GM12878 (cell line): ENCODE measurements at regions of chr9 and their contacts with region 1.

Region 1: GRCh38 chr9:123929870-123930831 is at the start of gene DENND1A:
- DNase-seq: no peak
- ATAC-seq: peak; percentile 83
- H3K4me3 ChIP-seq: peak within 1 kb of the TSS; percentile 85
- H3K27ac ChIP-seq: peak within 1 kb of the TSS; percentile 79
- H3K4me1 ChIP-seq: peaks cover 18% of the 10 kb centered on the region
- H3K27me3 ChIP-seq: no peaks in the 10 kb centered on the region
- CTCF ChIP-seq: no peak
- EP300 ChIP-seq: no peak
- POLR2A ChIP-seq: peak; percentile 71; the same call in 1 of the 2 replicates
- RAD21 ChIP-seq: no peak
- polyA plus RNA-seq, gene DENND1A: 14.1 to 19.1 TPM

Region 2: GRCh38 chr9:123544007-123544827 is 385.9 kb before region 1 on chr9:
- CTCF ChIA-PET with region 1: no interaction called
- POLR2A ChIA-PET with region 1: no interaction called
- RAD21 ChIA-PET with region 1: no interaction called
- SMC1A ChIA-PET with region 1: no interaction called
- in situ Hi-C with region 1: no loop called
- intact Hi-C with region 1: loop called (anchors 1 kb)
- DNase-seq: no peak
- ATAC-seq: peak; percentile 65
- H3K4me3 ChIP-seq: no peak overlapping the region
- H3K27ac ChIP-seq: no peak overlapping the region
- H3K4me1 ChIP-seq: no peaks in the 10 kb centered on the region
- H3K27me3 ChIP-seq: no peaks in the 10 kb centered on the region
- CTCF ChIP-seq: peak; percentile 68 to 89 (median 81)
- EP300 ChIP-seq: no peak
- POLR2A ChIP-seq: no peak
- RAD21 ChIP-seq: peak; percentile 98

Region 3: DNA sequence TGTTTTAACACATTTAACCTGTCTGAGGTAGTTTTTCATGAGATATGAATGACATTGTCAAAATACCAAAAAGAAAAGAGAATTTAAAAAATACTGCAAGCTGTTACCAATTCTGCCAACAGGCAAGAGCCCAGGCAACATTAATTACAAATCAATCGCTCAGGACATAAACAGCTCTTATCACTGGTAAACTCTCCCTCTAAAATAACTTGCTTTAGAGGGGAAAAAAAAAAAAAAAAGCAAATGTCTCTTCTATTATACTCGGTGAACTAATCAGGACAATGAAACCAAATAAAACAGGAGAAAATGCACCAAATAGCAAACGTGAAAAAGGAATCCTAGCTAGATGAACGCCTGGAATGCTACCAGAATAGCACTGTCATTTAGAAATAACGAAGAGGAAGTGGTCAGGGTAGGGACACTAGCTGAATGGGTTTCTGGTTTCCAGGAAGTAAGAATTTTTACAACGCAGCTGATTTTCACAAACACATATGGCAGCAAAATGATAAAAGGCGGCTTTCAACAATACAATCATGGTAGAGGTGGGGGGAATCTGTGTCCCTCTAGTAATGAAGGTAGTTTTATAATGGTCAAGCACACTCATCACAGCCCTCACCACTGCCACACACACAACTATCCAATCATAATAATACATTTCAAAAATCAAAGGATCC is 95.1 kb before region 1 on chr9:
- CTCF ChIA-PET with region 1: no interaction called
- POLR2A ChIA-PET with region 1: no interaction called
- RAD21 ChIA-PET with region 1: no interaction called
- SMC1A ChIA-PET with region 1: interaction called, 5 read pairs
- in situ Hi-C with region 1: no loop called
- intact Hi-C with region 1: loop called (anchors 5 kb)
- DNase-seq: peak; percentile 34
- ATAC-seq: peak; percentile 91
- H3K4me3 ChIP-seq: no peak overlapping the region
- H3K27ac ChIP-seq: no peak overlapping the region
- H3K4me1 ChIP-seq: no peaks in the 10 kb centered on the region
- H3K27me3 ChIP-seq: no peaks in the 10 kb centered on the region
- CTCF ChIP-seq: no peak
- EP300 ChIP-seq: peak in 1 of 2 experiments; percentile 65; a peak in 1 of 4 replicates
- POLR2A ChIP-seq: no peak
- RAD21 ChIP-seq: no peak

Region 4: GRCh38 chr9:123893831-123894460 is 36.2 kb before region 1 on chr9:
- CTCF ChIA-PET with region 1: no interaction called
- POLR2A ChIA-PET with region 1: interaction called, 4 read pairs
- RAD21 ChIA-PET with region 1: no interaction called
- SMC1A ChIA-PET with region 1: interaction called, 11 read pairs
- in situ Hi-C with region 1: no loop called
- intact Hi-C with region 1: no loop called
- DNase-seq: no peak
- ATAC-seq: peak; percentile 44
- H3K4me3 ChIP-seq: no peak overlapping the region
- H3K27ac ChIP-seq: peak overlapping the region; percentile 24; the same call in 1 of the 2 replicates
- H3K4me1 ChIP-seq: peaks cover 41% of the 10 kb centered on the region
- H3K27me3 ChIP-seq: no peaks in the 10 kb centered on the region
- CTCF ChIP-seq: no peak
- EP300 ChIP-seq: 0 out of 4 replicates have a peak, but pooled peaks of 1 of the 2 experiments have one; percentile 9
- POLR2A ChIP-seq: no peak
- RAD21 ChIP-seq: no peak

Region 5: DNA sequence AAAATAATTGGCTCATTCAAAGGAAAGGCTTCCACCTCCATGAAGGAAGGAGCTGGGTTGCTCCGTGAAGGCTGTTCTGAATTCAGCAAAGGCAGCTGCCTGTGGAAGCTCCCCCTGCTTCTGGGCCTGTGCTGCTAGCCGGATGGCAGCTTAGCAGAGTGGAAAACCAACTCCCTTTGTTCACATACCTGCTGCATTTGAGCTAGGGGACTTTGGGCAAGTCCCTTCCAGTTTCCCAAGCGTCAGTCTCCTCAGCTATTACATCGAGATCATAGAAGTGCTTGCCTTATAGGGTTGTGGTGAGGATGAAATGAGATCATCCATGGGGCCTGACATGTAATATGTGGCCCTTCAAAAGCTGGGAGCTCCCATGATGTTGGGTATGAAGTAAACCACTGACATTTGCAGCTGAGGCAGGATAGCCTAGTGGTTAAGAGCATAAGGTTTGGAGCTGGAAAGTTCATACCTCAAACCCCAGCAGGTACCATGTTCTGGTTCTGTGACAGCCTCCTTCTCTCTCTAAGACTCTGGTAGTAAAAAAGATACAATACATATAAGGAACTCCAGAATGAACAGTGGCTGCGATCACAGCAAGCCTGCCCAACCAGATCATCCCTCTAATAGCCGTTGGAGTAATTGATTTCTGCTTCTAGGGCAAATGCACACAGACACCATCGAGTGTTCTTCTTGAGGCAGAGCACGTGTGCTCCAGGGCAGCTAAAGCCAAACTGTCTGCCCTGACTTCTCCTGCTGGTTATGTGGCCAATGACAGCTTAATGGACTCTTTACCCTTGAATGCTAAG is 10.8 kb after region 1 on chr9:
- CTCF ChIA-PET with region 1: interaction called, 18 read pairs
- POLR2A ChIA-PET with region 1: interaction called, 13 read pairs
- RAD21 ChIA-PET with region 1: interaction called, 43 read pairs
- SMC1A ChIA-PET with region 1: interaction called, 22 read pairs
- in situ Hi-C with region 1: no loop called
- intact Hi-C with region 1: no loop called
- DNase-seq: peak; percentile 77
- ATAC-seq: peak; percentile 95
- H3K4me3 ChIP-seq: no peak overlapping the region
- H3K27ac ChIP-seq: no peak overlapping the region
- H3K4me1 ChIP-seq: no peaks in the 10 kb centered on the region
- H3K27me3 ChIP-seq: no peaks in the 10 kb centered on the region
- CTCF ChIP-seq: no peak
- EP300 ChIP-seq: peak; percentile 64 to 82; a peak in 2 of 4 replicates
- POLR2A ChIP-seq: no peak
- RAD21 ChIP-seq: no peak

Region 6: GRCh38 chr9:124006448-124007118 is 76.4 kb after region 1 on chr9:
- CTCF ChIA-PET with region 1: interaction called, 3 read pairs
- POLR2A ChIA-PET with region 1: interaction called, 6 read pairs
- RAD21 ChIA-PET with region 1: interaction called, 13 read pairs
- SMC1A ChIA-PET with region 1: interaction called, 4 read pairs
- in situ Hi-C with region 1: no loop called
- intact Hi-C with region 1: no loop called
- DNase-seq: no peak
- ATAC-seq: peak; percentile 62
- H3K4me3 ChIP-seq: no peak overlapping the region
- H3K27ac ChIP-seq: no peak overlapping the region
- H3K4me1 ChIP-seq: peaks cover 25% of the 10 kb centered on the region
- H3K27me3 ChIP-seq: peaks cover 0 to 54% of the 10 kb centered on the region in 2 experiments; a peak in 3 of 4 replicates
- CTCF ChIP-seq: no peak
- EP300 ChIP-seq: no peak; a peak in 1 of 4 replicates
- POLR2A ChIP-seq: no peak
- RAD21 ChIP-seq: no peak